Psoas muscle (tissue), 8 donors: ENCODE measurements at regions of chr13 and their contacts with region 1.

Region 1: DNA sequence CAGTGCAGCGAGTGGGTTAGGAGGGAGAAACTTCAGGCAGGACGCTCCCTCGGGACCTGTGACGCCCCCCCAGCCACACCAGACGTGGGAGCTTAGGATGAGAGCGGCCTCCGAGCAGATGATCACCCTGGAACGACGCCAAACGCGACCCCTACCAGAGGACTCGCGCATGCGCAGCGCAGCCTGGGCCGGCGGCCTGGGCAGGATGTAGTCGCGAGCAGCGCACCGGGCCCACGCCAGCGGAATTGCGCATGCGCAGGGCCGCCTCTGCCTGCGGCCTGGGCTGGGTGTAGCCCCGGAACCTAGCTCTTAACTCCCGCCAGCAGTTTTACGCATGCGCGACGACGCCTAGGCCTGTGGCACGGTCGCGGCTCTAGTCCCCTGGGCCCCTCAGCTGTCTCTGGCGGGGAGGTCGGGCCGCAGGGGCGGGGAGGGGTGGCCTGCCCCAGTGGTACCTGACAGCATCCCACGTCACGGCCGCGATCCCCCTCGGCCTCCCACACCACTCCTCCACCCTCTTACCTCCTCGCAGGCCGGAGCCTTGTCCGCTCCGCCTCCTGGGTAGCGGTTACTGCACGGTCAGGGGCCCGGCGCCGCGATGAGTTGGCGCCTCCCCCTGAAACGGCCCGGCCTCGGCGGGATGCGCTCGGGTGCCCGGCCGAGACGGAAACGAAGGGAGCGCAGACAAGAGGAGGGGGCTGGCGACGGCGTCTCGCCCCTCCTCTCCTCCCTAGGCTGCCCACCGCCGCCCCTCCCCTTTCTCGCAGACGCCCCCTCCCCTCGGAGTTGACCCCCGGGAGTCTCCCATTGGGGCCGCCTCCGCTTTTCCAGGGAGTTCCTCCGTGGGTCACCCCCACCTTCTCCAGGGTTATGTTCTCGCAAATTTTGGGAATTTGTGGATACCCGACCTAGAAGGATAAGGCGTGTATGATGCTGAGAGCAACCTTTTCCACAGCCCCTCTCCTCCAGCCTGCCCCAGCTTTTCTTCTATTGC is at the start of gene RCBTB2:
- DNase-seq: peak; percentile 99 to 100
- ATAC-seq: peak; percentile 97 to 98 (median 98)
- H3K4me3 ChIP-seq: peak within 1 kb of the TSS; percentile 80
- H3K27ac ChIP-seq: peak within 1 kb of the TSS; percentile 92
- H3K4me1 ChIP-seq: peaks cover 11% of the 10 kb centered on the region
- H3K27me3 ChIP-seq: no peaks in the 10 kb centered on the region
- CTCF ChIP-seq: no peak
- total RNA-seq, gene RCBTB2: 2.8 to 18.5 (median 10.3) TPM

Region 2: GRCh38 chr13:47628666-47629065 is 904.1 kb before region 1 on chr13:
- intact Hi-C with region 1: no loop called
- DNase-seq: no peak
- ATAC-seq: no peak
- H3K4me3 ChIP-seq: no peak overlapping the region
- H3K27ac ChIP-seq: no peak overlapping the region
- H3K4me1 ChIP-seq: no peaks in the 10 kb centered on the region
- H3K27me3 ChIP-seq: no peaks in the 10 kb centered on the region
- CTCF ChIP-seq: no peak

Region 3: GRCh38 chr13:48400850-48401291 is 131.9 kb before region 1 on chr13:
- intact Hi-C with region 1: no loop called
- DNase-seq: no peak
- ATAC-seq: peak in 2 of 4 donors; percentile 43 to 74
- H3K4me3 ChIP-seq: no peak overlapping the region
- H3K27ac ChIP-seq: peak overlapping the region; percentile 3
- H3K4me1 ChIP-seq: peaks cover 5% of the 10 kb centered on the region
- H3K27me3 ChIP-seq: no peaks in the 10 kb centered on the region
- CTCF ChIP-seq: no peak

Region 4: GRCh38 chr13:48571126-48571913 is 38.5 kb after region 1 on chr13:
- intact Hi-C with region 1: loop called (anchors 5 kb)
- DNase-seq: no peak
- ATAC-seq: peak; percentile 77 to 85 (median 83)
- H3K4me3 ChIP-seq: peak overlapping the region; percentile 54
- H3K27ac ChIP-seq: peak overlapping the region; percentile 86
- H3K4me1 ChIP-seq: peaks cover 67% of the 10 kb centered on the region
- H3K27me3 ChIP-seq: no peaks in the 10 kb centered on the region
- CTCF ChIP-seq: no peak